SK-N-SH (cell line): ENCODE measurements at regions of chr10 and their contacts with region 1.

Region 1: GRCh38 chr10:21172930-21173811 is 276.1 kb upstream of the NEBL start:
- DNase-seq: peak; percentile 70
- H3K4me3 ChIP-seq: peak overlapping the region; percentile 63 to 64
- H3K27ac ChIP-seq: peak overlapping the region in 1 of 2 experiments; percentile 76; a peak in 1 of 4 replicates
- H3K4me1 ChIP-seq: peaks cover 0 to 13% of the 10 kb centered on the region in 2 experiments; a peak in 1 of 4 replicates
- H3K27me3 ChIP-seq: no peaks in the 10 kb centered on the region
- CTCF ChIP-seq: no peak
- EP300 ChIP-seq: no peak
- RAD21 ChIP-seq: no peak

Region 2: GRCh38 chr10:21125471-21126228 is 47.5 kb before region 1 on chr10:
- CTCF ChIA-PET with region 1: no interaction called
- POLR2A ChIA-PET with region 1: no interaction called
- DNase-seq: no peak
- H3K4me3 ChIP-seq: no peak overlapping the region
- H3K27ac ChIP-seq: no peak overlapping the region
- H3K4me1 ChIP-seq: peaks cover 0 to 2% of the 10 kb centered on the region in 2 experiments; a peak in 1 of 4 replicates
- H3K27me3 ChIP-seq: no peaks in the 10 kb centered on the region
- CTCF ChIP-seq: no peak
- EP300 ChIP-seq: no peak
- RAD21 ChIP-seq: no peak

Region 3: GRCh38 chr10:21160116-21160515 is 13.1 kb before region 1 on chr10:
- CTCF ChIA-PET with region 1: interaction called, 10 read pairs
- POLR2A ChIA-PET with region 1: no interaction called
- DNase-seq: no peak
- H3K4me3 ChIP-seq: no peak overlapping the region
- H3K27ac ChIP-seq: no peak overlapping the region; a peak in 1 of 4 replicates
- H3K4me1 ChIP-seq: peaks cover 0 to 14% of the 10 kb centered on the region in 2 experiments; a peak in 2 of 4 replicates
- H3K27me3 ChIP-seq: no peaks in the 10 kb centered on the region
- CTCF ChIP-seq: no peak
- EP300 ChIP-seq: no peak
- RAD21 ChIP-seq: no peak